ENCODE measurements at regions of chr16 and their contacts with region 1.

Region 1: DNA sequence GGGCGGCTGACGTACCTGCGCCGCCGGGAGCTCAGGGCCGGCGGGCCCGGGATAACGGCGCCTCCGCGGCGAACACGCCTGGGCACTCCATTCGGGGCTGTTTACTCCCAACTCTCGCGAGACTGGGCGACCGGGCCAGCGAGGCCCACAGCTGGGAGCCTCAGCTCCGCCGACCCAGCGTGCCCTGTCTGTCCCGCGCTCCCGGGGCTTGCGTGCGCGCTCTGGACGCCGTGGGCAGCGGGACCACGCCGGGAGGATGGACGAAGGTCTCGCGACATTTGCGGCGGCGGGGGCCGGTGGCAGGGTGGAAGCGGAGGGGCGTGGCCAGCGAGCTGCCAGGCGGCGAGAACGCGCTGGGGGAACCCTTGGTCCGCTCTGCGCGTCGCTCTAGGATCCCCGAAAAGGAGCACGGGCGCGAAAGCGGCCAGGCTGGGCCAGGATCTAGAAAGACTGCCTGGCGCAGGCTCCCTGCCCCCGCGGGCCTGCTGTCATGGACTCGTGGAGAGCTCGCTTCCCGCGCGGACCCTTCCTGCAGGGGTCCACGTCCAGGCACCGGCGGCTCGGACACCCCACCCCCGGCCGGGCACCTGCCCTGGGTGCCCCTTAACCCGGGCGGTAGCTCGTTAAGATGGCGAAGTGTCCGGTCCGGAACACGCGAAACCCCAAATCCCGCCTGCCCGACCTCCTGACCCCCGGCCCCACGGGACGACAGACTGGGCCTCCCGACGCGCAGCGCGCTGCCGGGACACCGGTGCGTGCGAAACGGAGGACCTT is at the start of gene MBTPS1:
- DNase-seq: peak; percentile 93 to 99
- H3K4me3 ChIP-seq: peak within 1 kb of the TSS; percentile 87
- H3K27ac ChIP-seq: peak within 1 kb of the TSS; percentile 67
- H3K4me1 ChIP-seq: peaks cover 39% of the 10 kb centered on the region
- H3K27me3 ChIP-seq: no peaks in the 10 kb centered on the region
- CTCF ChIP-seq: no peak; the same call in 1 of the 2 replicates
- total RNA-seq, gene MBTPS1: 80.3 and 96.0 TPM in 2 replicates

Region 2: GRCh38 chr16:84096115-84097012 is 20.5 kb before region 1 on chr16:
- CTCF ChIA-PET with region 1: no interaction called
- POLR2A ChIA-PET with region 1: interaction called, 23 read pairs
- intact Hi-C with region 1: no loop called
- DNase-seq: no peak
- H3K4me3 ChIP-seq: no peak overlapping the region
- H3K27ac ChIP-seq: no peak overlapping the region; the same call in 1 of the 2 replicates
- H3K4me1 ChIP-seq: peaks cover 25% of the 10 kb centered on the region
- H3K27me3 ChIP-seq: no peaks in the 10 kb centered on the region
- CTCF ChIP-seq: no peak

Region 3: GRCh38 chr16:84103678-84104077 is 13.2 kb before region 1 on chr16:
- CTCF ChIA-PET with region 1: interaction called, 6 read pairs
- POLR2A ChIA-PET with region 1: interaction called, 23 read pairs
- intact Hi-C with region 1: loop called (anchors 2 kb)
- DNase-seq: peak; percentile 34 to 83
- H3K4me3 ChIP-seq: peak overlapping the region; percentile 28; the same call in 1 of the 2 replicates
- H3K27ac ChIP-seq: peak overlapping the region; percentile 60
- H3K4me1 ChIP-seq: peaks cover 63% of the 10 kb centered on the region
- H3K27me3 ChIP-seq: no peaks in the 10 kb centered on the region
- CTCF ChIP-seq: no peak

Region 4: DNA sequence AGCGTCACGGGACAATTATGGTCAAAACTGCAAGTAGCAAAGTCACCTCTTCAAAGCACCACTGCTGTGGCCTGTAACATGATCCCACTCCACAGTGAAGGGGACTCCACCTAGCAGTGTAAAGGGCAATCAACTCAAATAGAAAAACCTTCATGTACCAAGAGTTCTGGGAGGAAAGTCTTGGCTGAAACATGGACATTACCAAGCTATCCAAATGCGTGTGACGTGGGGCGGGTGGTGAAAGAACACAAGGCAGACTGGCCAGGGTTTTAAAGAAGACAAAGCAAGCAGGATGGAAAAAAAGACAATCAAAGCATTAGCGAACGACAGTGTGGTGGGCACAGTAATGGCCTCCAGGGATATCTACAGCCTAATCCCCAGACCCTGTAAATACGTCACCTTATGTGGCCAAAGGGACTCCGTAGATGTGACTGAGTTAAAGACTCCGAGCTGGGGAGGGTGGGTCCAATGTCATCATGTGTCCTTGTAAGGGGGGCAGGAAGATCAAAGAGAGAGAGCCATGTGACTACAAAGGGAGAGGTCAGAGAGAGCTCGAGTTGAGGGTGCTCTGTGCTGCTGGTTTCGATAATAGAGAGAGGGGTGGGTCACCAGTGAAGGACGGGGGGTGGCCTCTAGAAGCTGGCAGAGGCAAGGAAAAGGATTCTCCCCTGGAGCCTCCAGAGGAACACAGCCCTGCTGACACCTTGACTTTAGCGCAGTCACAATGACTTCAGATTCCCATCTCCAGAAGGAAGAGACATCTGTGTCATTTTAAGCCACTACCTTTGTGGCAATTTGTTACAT is 22.1 kb after region 1 on chr16:
- CTCF ChIA-PET with region 1: no interaction called
- POLR2A ChIA-PET with region 1: interaction called, 4 read pairs
- intact Hi-C with region 1: loop called (anchors 1 kb)
- DNase-seq: peak; percentile 53 to 67
- H3K4me3 ChIP-seq: no peak overlapping the region
- H3K27ac ChIP-seq: peak overlapping the region; percentile 54
- H3K4me1 ChIP-seq: peaks cover 28% of the 10 kb centered on the region
- H3K27me3 ChIP-seq: no peaks in the 10 kb centered on the region
- CTCF ChIP-seq: no peak

Measured in PC-9 (cell line).